ENCODE measurements at regions of chr1 and their contacts with region 1.

Region 1: GRCh38 chr1:202852163-202852904 is 36.6 kb downstream of the RABIF start:
- DNase-seq: no peak
- ATAC-seq: peak; percentile 91
- H3K4me3 ChIP-seq: no peak overlapping the region
- H3K27ac ChIP-seq: no peak overlapping the region
- H3K4me1 ChIP-seq: peaks cover 7% of the 10 kb centered on the region; the same call in 1 of the 2 replicates
- H3K27me3 ChIP-seq: no peaks in the 10 kb centered on the region
- CTCF ChIP-seq: peak; percentile 45 to 51 (median 48)
- EP300 ChIP-seq: no peak
- POLR2A ChIP-seq: no peak
- RAD21 ChIP-seq: peak; percentile 85

Region 2: GRCh38 chr1:202586018-202586821 is 266.1 kb before region 1 on chr1:
- CTCF ChIA-PET with region 1: no interaction called
- POLR2A ChIA-PET with region 1: no interaction called
- RAD21 ChIA-PET with region 1: no interaction called
- SMC1A ChIA-PET with region 1: no interaction called
- in situ Hi-C with region 1: no loop called
- intact Hi-C with region 1: no loop called
- DNase-seq: peak; percentile 40
- ATAC-seq: peak; percentile 73
- H3K4me3 ChIP-seq: no peak overlapping the region
- H3K27ac ChIP-seq: no peak overlapping the region
- H3K4me1 ChIP-seq: peaks cover 10% of the 10 kb centered on the region
- H3K27me3 ChIP-seq: no peaks in the 10 kb centered on the region
- CTCF ChIP-seq: no peak
- EP300 ChIP-seq: no peak
- POLR2A ChIP-seq: no peak
- RAD21 ChIP-seq: no peak

Region 3: GRCh38 chr1:202750758-202751157 is 101.6 kb before region 1 on chr1:
- CTCF ChIA-PET with region 1: interaction called, 14 read pairs
- POLR2A ChIA-PET with region 1: interaction called, 5 read pairs
- RAD21 ChIA-PET with region 1: no interaction called
- SMC1A ChIA-PET with region 1: no interaction called
- in situ Hi-C with region 1: no loop called
- intact Hi-C with region 1: no loop called
- DNase-seq: no peak
- ATAC-seq: no peak
- H3K4me3 ChIP-seq: no peak overlapping the region
- H3K27ac ChIP-seq: no peak overlapping the region
- H3K4me1 ChIP-seq: no peaks in the 10 kb centered on the region
- H3K27me3 ChIP-seq: no peaks in the 10 kb centered on the region
- CTCF ChIP-seq: no peak; a peak in 1 of 6 replicates
- EP300 ChIP-seq: no peak
- POLR2A ChIP-seq: no peak
- RAD21 ChIP-seq: 0 out of 2 replicates have a peak, but pooled peaks have one; percentile 9

Region 4: DNA sequence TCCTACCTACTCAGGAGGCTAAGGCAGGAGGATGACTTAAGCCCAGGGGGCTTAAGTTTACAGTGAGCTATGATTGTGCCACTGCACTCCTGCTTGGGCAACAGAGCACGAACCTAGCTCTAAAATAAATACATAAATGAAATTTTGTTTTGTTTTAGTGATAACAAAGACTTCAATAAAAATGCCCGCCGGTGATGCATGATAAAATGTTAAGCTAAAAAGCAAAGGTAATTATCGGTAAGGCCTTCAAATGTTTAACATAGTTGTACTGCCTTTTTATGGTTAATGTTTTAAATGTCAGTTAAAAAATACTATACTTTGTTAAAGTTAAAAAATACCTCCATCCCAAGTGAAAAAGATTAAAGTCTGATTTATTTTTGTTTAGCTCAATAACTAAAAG is 71.2 kb before region 1 on chr1:
- CTCF ChIA-PET with region 1: interaction called, 4 read pairs
- POLR2A ChIA-PET with region 1: interaction called, 13 read pairs
- RAD21 ChIA-PET with region 1: no interaction called
- SMC1A ChIA-PET with region 1: no interaction called
- in situ Hi-C with region 1: no loop called
- intact Hi-C with region 1: no loop called
- DNase-seq: no peak
- ATAC-seq: no peak
- H3K4me3 ChIP-seq: no peak overlapping the region
- H3K27ac ChIP-seq: no peak overlapping the region
- H3K4me1 ChIP-seq: no peaks in the 10 kb centered on the region
- H3K27me3 ChIP-seq: no peaks in the 10 kb centered on the region
- CTCF ChIP-seq: no peak
- EP300 ChIP-seq: no peak
- POLR2A ChIP-seq: no peak
- RAD21 ChIP-seq: no peak

Measured in GM12878 (cell line).